ENCODE measurements at regions of chr15 and their contacts with region 1.

Region 1: GRCh38 chr15:31867536-31868442 is 162.5 kb upstream of the CHRNA7 start:
- DNase-seq: peak; percentile 20
- ATAC-seq: peak; percentile 72
- H3K4me3 ChIP-seq: no peak overlapping the region
- H3K27ac ChIP-seq: no peak overlapping the region
- H3K4me1 ChIP-seq: no peaks in the 10 kb centered on the region; the same call in 1 of the 2 replicates
- H3K27me3 ChIP-seq: peaks cover 1 to 16% of the 10 kb centered on the region in 2 experiments; a peak in 4 of 5 replicates
- CTCF ChIP-seq: peak; percentile 76
- EP300 ChIP-seq: no peak
- POLR2A ChIP-seq: no peak
- RAD21 ChIP-seq: no peak

Region 2: DNA sequence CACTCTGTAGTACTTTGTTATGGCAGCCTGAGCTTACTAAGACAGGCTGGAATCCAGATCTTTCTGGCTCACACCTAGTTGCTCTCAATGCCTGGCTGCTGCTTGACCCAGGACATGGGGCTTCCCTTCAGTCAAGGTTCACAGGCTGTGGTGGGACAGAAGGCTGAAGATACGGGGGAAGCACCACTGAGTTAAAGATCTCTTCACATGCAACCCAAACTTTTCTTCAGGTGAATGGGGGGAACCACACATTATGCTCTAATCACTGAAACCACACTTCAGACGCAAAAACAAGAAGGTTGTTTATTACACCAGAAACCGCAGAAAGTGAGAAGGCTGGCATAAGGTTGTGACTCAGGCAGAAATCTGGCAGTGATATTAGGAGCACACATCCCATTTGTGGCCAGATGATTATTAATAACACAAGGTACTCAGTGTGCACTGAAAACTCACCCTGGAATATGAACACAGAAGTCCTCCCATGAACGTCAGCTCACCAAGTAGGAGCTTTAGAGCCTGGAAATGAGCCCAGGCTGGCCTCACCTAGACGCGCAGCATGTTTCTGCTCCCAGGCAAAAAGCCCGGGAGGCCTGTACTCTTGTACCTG is 68.0 kb before region 1 on chr15:
- CTCF ChIA-PET with region 1: no interaction called
- POLR2A ChIA-PET with region 1: no interaction called
- in situ Hi-C with region 1: loop called (anchors 10 kb)
- intact Hi-C with region 1: no loop called
- DNase-seq: no peak
- ATAC-seq: no peak
- H3K4me3 ChIP-seq: no peak overlapping the region
- H3K27ac ChIP-seq: no peak overlapping the region
- H3K4me1 ChIP-seq: no peaks in the 10 kb centered on the region
- H3K27me3 ChIP-seq: no peaks in the 10 kb centered on the region; a peak in 1 of 5 replicates
- CTCF ChIP-seq: no peak
- EP300 ChIP-seq: no peak
- POLR2A ChIP-seq: no peak
- RAD21 ChIP-seq: no peak

Region 3: DNA sequence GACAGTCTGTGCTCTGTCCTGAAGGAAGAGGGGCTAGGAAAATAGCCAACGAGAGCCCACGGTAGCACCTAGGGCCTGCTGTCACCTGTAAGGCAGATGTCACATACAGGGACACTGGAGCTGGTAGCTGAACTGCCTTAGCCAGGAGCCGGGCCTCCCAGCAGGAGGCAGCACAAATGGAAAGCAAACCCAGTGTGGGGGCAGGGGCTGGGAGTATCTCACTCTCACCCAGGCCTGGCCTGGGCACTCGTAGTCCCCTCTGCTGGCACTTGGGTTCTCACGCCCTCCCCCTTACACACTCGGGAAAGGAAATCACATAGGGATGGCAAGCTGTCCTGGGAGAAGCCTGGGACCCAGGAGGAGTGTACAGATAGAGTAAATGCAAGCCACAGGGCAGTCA is 10.6 kb before region 1 on chr15:
- CTCF ChIA-PET with region 1: no interaction called
- POLR2A ChIA-PET with region 1: no interaction called
- in situ Hi-C with region 1: no loop called
- intact Hi-C with region 1: no loop called
- DNase-seq: no peak
- ATAC-seq: peak; percentile 33; the same call in 2 of the 3 replicates
- H3K4me3 ChIP-seq: no peak overlapping the region
- H3K27ac ChIP-seq: no peak overlapping the region
- H3K4me1 ChIP-seq: no peaks in the 10 kb centered on the region
- H3K27me3 ChIP-seq: peaks cover 0 to 3% of the 10 kb centered on the region in 2 experiments; a peak in 2 of 5 replicates
- CTCF ChIP-seq: no peak
- EP300 ChIP-seq: no peak
- POLR2A ChIP-seq: no peak
- RAD21 ChIP-seq: no peak

Measured in HepG2 (cell line).